Activated B cell treated with CpG ODN at 0.5 μM for 24 hours (primary cell): ENCODE measurements at regions of chr14 and their contacts with region 1.

Region 1: DNA sequence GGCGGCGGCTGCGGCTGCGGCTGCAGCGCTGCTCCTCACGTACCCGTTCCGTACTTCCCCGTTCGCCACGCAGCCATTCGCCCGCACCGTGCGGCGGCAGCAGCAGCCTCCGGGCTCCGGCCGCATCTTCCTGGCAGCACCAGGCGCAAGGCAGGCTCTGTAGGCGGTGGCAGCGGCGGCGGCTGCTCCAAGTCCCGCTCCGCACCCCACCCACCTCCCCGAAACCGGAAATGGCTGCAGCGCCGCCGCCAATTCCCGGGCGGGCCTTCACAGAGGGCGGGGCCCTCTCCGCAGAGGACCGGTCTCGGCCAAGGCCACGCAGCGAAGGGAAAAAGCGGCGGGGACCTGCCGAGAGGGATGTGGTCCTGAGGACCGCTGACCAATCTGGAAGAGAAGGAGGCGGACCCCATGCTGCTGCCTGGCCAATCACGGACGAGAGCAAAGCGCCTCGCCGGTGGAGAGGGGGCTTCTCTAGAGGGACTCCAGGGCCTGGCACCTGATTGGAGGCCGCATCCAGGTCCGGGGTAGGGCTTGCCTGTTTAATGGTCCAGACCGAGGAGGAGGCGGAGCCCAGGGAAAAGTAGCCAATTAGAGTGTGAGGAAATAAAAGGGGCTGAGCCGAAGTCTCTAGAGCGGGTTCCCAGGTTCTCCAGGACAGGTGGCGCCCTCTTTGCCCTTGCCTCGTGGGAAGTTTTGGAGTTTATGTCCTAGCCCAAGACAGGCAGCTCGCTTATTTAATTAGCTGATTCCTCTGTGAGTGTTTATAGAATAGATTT is at the start of gene SPTLC2:
- DNase-seq: peak; percentile 84
- ATAC-seq: peak; percentile 94
- H3K4me3 Mint-ChIP-seq: peak within 1 kb of the TSS; percentile 95
- H3K27ac Mint-ChIP-seq: peak within 1 kb of the TSS; percentile 86
- H3K4me1 Mint-ChIP-seq: peaks cover 42% of the 10 kb centered on the region
- H3K27me3 Mint-ChIP-seq: no peaks in the 10 kb centered on the region
- CTCF ChIP-seq: no peak
- total RNA-seq, gene SPTLC2: 34.1 and 43.8 TPM in 2 replicates

Region 2: DNA sequence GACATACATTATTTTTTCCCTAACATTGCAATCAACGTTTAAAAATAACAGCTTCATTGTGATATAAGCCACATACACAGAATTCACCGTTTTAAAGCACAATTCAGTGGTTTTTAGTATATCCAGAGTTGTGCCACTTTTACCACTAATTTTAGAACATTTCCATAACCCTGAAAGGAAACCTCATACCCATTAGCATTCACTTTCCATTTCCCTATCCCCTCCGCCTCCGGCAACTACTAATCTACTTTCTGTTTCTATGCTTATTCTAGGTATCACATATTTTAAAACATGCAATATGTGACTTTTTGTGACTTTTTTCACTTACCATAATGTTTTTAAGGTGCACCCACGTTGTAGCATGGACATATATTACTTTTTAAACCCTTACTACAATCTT is 62.4 kb before region 1 on chr14:
- CTCF ChIA-PET with region 1: no interaction called
- POLR2A ChIA-PET with region 1: no interaction called
- intact Hi-C with region 1: loop called (anchors 5 kb)
- DNase-seq: no peak
- ATAC-seq: no peak
- H3K4me3 Mint-ChIP-seq: no peak overlapping the region
- H3K27ac Mint-ChIP-seq: peak overlapping the region; percentile 43
- H3K4me1 Mint-ChIP-seq: no peaks in the 10 kb centered on the region
- H3K27me3 Mint-ChIP-seq: no peaks in the 10 kb centered on the region
- CTCF ChIP-seq: no peak

Region 3: GRCh38 chr14:77593501-77593961 is 23.1 kb before region 1 on chr14:
- CTCF ChIA-PET with region 1: no interaction called
- POLR2A ChIA-PET with region 1: interaction called, 9 read pairs
- intact Hi-C with region 1: loop called (anchors 1 kb)
- DNase-seq: no peak
- ATAC-seq: peak; percentile 72
- H3K4me3 Mint-ChIP-seq: peak overlapping the region; percentile 78
- H3K27ac Mint-ChIP-seq: peak overlapping the region; percentile 95
- H3K4me1 Mint-ChIP-seq: peaks cover 90% of the 10 kb centered on the region
- H3K27me3 Mint-ChIP-seq: no peaks in the 10 kb centered on the region
- CTCF ChIP-seq: no peak

Region 4: DNA sequence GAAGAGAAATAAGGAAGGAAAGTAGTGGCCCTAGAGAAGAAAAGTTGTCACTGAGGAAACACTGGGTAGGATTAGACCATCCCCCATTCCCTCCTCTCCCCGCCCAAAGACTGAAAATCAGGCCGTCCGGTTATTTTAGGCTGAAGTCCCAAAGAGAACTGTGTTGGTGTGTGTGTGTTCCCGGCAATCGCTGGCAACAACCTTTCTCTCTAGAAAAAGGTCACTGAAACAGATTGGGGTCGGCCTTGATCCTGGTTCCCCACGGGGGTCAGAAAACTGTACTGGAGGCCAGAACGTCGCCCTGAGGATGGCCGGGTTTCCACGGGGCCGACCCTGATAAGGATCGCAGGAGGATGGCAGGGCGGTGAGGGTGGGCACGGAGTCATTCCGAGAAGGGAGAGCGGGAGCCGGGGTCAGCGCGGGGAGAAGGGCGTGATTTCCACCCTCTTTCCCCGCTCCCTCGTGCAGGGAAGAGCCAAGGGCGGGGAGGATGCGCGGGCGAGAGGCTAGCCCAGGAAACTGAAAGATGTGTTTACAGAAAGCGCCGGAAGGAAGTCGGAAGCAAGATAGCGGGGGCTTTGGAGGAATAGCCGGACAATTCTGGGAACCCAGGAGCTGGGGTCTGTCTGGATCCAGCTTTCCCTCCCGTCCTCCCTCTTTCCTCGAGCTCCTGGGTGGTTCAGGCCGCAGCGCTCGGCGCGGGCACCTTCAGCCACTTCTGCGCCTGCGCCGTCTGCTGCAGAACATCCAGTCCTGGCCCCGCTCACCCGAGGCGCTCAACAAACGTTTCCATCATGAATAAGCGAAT is 25.1 kb after region 1 on chr14:
- CTCF ChIA-PET with region 1: interaction called, 3 read pairs
- POLR2A ChIA-PET with region 1: interaction called, 10 read pairs
- intact Hi-C with region 1: loop called (anchors 1 kb)
- DNase-seq: peak; percentile 61
- ATAC-seq: peak; percentile 78
- H3K4me3 Mint-ChIP-seq: peak overlapping the region; percentile 95
- H3K27ac Mint-ChIP-seq: peak overlapping the region; percentile 93
- H3K4me1 Mint-ChIP-seq: peaks cover 16% of the 10 kb centered on the region
- H3K27me3 Mint-ChIP-seq: no peaks in the 10 kb centered on the region
- CTCF ChIP-seq: no peak

Region 5: DNA sequence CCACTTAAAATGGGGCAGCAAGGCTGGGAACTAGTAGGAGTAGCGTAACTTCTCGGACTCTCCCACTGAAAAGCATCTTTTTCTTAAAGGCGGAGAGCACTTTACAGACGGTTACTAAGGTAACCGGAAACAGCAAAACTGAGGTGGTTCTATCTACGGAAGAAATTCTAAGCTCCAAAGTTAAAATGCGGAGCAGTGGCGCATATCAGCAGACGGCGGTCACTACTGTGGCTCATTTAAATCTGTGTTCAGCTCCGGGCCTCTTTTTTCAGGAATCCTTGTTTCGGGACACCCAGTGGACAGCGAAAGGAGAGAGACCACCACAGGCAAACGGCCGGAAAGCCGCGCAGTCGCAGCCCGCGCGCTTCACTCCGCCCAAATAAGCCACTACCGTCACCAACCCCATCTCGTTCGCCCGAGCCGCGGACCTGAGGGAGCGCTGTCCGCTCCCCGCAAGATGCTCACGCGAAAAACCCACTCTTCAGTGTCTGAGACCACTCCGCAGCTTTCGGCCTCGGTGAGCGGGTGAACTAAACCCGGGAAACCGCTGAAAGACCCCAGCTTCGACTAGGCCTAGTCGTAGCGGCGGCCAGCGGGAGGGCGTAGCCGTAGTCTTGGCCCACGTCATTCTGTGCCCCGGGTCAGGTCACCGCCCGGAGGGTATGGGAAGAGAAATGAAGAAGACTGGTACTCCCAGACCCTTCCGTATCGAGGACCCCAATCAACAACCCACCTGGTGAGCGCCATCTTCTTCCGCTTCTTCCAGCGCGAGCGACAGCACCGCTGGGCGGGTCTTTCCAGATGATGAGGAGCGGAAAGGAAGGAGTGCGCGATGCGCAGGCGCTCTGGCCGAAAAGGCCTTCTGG is 144.0 kb after region 1 on chr14 and contains the start of gene SNW1:
- CTCF ChIA-PET with region 1: no interaction called
- POLR2A ChIA-PET with region 1: no interaction called
- intact Hi-C with region 1: loop called (anchors 1 kb)
- DNase-seq: peak; percentile 77
- ATAC-seq: peak; percentile 91
- H3K4me3 Mint-ChIP-seq: peak within 1 kb of the TSS; percentile 97
- H3K27ac Mint-ChIP-seq: peak within 1 kb of the TSS; percentile 97
- H3K4me1 Mint-ChIP-seq: peaks cover 37% of the 10 kb centered on the region
- H3K27me3 Mint-ChIP-seq: no peaks in the 10 kb centered on the region
- CTCF ChIP-seq: no peak
- total RNA-seq, gene SNW1: 88.2 and 89.3 TPM in 2 replicates

Region 6: DNA sequence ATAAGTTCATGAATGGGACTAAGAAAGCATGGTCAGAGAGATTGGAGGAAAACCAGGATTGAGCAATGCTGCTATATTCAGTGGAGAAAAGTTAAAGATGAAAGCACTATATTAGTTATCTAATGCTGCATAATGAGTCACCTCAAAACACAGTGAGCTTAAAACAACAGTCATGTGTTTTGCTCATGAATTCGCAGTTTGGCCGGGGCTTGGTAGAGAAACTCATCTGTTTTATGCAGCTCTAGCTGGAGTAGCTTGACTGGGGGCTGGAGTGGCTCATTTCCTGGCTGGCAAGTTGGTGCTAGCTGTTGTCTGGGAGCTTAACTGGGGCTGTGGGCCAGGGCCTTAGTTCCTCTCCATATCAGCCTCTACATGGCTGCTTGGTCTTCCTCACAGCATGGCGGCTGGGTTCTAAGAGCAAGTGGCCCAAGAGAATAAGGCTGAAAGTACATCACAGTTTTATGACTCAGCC is 273.4 kb after region 1 on chr14:
- CTCF ChIA-PET with region 1: no interaction called
- POLR2A ChIA-PET with region 1: no interaction called
- intact Hi-C with region 1: no loop called
- DNase-seq: no peak
- ATAC-seq: no peak
- H3K4me3 Mint-ChIP-seq: no peak overlapping the region
- H3K27ac Mint-ChIP-seq: no peak overlapping the region
- H3K4me1 Mint-ChIP-seq: no peaks in the 10 kb centered on the region
- H3K27me3 Mint-ChIP-seq: no peaks in the 10 kb centered on the region
- CTCF ChIP-seq: no peak